Colonic mucosa (tissue), 4 donors: ENCODE measurements at regions of chr11 and their contacts with region 1.

Region 1: GRCh38 chr11:34105079-34105956 is at the start of gene NAT10:
- DNase-seq: peak; percentile 97
- H3K4me3 ChIP-seq: peak within 1 kb of the TSS; percentile 99
- H3K27ac ChIP-seq: peak within 1 kb of the TSS; percentile 93
- H3K4me1 ChIP-seq: peaks cover 16% of the 10 kb centered on the region
- H3K27me3 ChIP-seq: no peaks in the 10 kb centered on the region
- CTCF ChIP-seq: no peak
- total RNA-seq, gene NAT10: 24.1 to 48.0 TPM

Region 2: GRCh38 chr11:33761471-33761870 is 343.8 kb before region 1 on chr11:
- intact Hi-C with region 1: no loop called
- DNase-seq: no peak
- H3K4me3 ChIP-seq: no peak overlapping the region
- H3K27ac ChIP-seq: no peak overlapping the region
- H3K4me1 ChIP-seq: no peaks in the 10 kb centered on the region
- H3K27me3 ChIP-seq: no peaks in the 10 kb centered on the region
- CTCF ChIP-seq: no peak

Region 3: DNA sequence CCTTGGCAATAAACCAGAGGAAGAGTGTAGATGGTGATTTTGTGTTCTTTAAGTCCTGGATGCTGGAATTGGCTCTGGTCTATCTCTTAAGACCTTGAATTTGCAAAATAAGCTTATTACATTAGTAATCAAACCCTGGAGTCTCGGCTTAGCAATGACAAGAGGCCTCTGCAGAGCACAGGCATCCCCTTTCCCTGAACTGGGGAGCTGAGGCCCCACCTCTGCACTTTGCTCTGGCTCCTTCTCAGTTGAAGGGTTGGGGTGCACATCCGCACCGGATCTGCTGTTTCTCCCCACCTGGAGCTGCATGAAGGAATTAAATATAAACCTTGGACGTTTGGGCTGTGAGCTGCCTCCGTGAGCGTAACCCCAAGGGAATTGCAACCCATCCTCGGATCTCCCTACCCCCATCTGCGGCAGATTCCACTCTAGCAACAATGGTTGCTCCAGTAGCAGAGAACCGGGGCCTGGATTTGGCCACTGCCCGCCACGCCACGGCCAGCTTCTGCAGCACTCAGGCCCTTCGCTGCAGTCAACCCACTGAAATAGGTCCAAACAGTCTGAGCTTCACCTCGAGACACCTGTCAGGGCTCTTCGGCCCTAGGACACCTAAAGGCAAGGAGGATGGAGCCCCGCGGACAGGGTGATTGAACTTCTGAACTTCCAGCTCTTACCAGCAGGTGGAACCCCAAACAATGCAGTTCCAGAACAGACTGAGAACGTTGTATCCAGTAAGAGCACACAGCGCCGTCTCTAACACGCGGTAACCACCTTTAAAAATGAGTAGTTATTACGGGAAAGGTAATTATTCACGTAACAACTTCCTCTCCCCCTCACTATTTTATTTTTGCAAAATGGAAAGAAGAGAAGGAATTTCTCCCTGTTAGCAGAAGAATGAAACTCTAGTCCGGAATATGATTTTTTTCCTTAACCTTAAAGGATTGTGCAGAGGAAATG is 108.5 kb before region 1 on chr11:
- intact Hi-C with region 1: loop called (anchors 5 kb)
- DNase-seq: peak; percentile 89
- H3K4me3 ChIP-seq: no peak overlapping the region
- H3K27ac ChIP-seq: no peak overlapping the region
- H3K4me1 ChIP-seq: no peaks in the 10 kb centered on the region
- H3K27me3 ChIP-seq: no peaks in the 10 kb centered on the region
- CTCF ChIP-seq: peak; percentile 82

Region 4: DNA sequence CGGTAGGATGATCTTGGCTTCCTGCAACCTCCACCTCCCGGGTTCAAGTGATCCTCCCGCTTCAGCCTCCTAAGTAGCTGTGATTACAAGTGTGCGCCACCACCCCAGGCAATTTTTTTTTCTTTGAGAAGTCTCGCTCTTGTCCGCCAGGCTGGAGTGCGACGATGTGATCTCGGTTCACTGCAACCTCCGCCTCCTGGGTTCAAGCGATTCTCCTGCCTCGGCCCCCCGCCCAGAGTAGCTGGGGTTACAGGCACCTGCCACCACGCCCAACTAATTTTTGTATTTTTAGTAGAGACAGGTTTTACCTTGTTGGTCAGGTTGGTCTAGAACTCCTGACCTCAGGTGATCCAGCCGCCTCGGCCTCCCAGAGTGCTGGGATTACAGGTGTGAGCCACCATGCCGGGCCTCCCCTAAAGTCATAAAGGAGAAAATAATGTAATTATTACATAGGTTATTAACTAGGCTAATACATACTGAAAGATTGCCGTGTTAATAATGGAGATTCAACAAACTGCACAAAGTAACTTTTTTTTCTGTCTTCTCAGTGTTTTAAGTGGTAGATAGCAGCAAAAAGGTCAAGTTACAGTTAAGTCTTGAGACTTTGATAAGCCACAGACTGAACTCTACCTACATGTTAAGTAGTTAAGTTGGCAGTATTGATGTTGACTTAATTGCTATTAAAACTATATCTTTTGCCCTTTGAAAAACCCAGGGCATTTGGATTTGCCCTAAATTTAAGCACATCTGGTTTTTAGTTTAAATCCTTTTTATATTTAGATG is 49.9 kb before region 1 on chr11:
- intact Hi-C with region 1: loop called (anchors 5 kb)
- DNase-seq: no peak
- H3K4me3 ChIP-seq: no peak overlapping the region
- H3K27ac ChIP-seq: no peak overlapping the region
- H3K4me1 ChIP-seq: peaks cover 33% of the 10 kb centered on the region
- H3K27me3 ChIP-seq: no peaks in the 10 kb centered on the region
- CTCF ChIP-seq: no peak